Left lung (tissue), 14 donors: ENCODE measurements at regions of chr7 and their contacts with region 1.

Region 1: GRCh38 chr7:5083311-5083711 is 37.7 kb downstream of the RBAK start:
- DNase-seq: peak in 3 of 4 donors; percentile 47 to 79 (median 74)
- ATAC-seq: no peak
- H3K4me3 ChIP-seq: no peak overlapping the region
- H3K27ac ChIP-seq: no peak overlapping the region
- H3K4me1 ChIP-seq: peaks cover 0 to 5% of the 10 kb centered on the region in 2 donors
- H3K27me3 ChIP-seq: peaks cover 0 to 50% of the 10 kb centered on the region in 2 donors
- CTCF ChIP-seq: no peak

Region 2: GRCh38 chr7:4797858-4798705 is 285.2 kb before region 1 on chr7:
- intact Hi-C with region 1: loop called in 1 of 2 experiments (anchors 10 kb)
- DNase-seq: peak in 2 of 4 donors; percentile 69 to 93
- ATAC-seq: peak; percentile 87
- H3K4me3 ChIP-seq: no peak overlapping the region
- H3K27ac ChIP-seq: no peak overlapping the region
- H3K4me1 ChIP-seq: peaks cover 0 to 9% of the 10 kb centered on the region in 2 donors
- H3K27me3 ChIP-seq: no peaks in the 10 kb centered on the region
- CTCF ChIP-seq: peak; percentile 84 to 91

Region 3: DNA sequence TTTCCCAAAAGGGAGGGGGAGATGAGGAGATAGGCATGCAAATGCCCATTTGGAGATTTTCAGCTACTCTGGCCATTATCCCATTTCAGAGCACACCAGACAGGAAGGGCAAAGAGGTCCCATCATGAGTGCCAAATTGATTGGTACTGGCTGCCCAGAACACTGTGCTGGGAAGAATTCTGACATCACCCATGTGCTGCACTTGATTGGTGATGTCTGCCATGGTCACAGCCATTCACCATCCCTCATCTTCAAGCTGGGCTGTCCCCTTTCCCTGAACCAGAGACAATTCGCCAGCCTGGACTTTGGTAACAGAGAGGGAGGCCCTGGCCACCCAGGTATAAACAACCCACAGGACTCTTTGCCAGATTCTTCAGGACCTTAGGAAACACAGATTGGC is 176.6 kb before region 1 on chr7:
- intact Hi-C with region 1: no loop called
- DNase-seq: no peak
- ATAC-seq: no peak
- H3K4me3 ChIP-seq: no peak overlapping the region
- H3K27ac ChIP-seq: no peak overlapping the region
- H3K4me1 ChIP-seq: no peaks in the 10 kb centered on the region
- H3K27me3 ChIP-seq: peaks cover 0 to 12% of the 10 kb centered on the region in 2 donors
- CTCF ChIP-seq: no peak

Region 4: DNA sequence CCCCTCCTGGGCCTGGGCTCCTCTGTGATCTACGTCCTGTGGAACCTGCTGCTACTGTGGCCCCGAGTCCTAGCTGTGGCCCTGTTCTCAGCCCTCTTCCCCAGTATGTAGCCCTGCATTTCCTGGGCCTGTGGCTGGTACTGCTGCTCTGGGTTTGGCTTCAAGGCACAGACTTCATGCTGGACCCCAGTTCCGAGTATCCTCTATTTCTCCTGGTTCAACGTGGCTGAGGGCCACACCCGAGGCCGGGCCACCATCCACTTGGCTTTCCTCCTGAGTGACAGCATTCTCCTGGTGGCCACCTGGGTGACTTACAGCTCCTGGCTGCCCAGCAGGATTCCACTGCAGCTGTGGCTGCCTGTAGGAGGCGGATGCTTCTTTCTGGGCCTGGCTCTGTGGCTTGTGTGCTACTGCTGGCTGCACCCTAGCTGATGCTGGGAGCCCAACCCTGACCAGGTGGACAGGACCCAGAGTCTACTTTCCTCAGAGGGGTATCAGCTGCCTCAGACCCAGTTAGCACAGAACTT is 86.6 kb before region 1 on chr7:
- intact Hi-C with region 1: loop called in 1 of 2 experiments (anchors 10 kb)
- DNase-seq: no peak
- ATAC-seq: no peak
- H3K4me3 ChIP-seq: no peak overlapping the region
- H3K27ac ChIP-seq: no peak overlapping the region
- H3K4me1 ChIP-seq: no peaks in the 10 kb centered on the region
- H3K27me3 ChIP-seq: no peaks in the 10 kb centered on the region
- CTCF ChIP-seq: no peak